SK-N-SH (cell line): ENCODE measurements at regions of chr20 and their contacts with region 1.

Region 1: GRCh38 chr20:56995576-56996075 is 270.8 kb downstream of the BMP7 start:
- DNase-seq: peak; percentile 59
- H3K4me3 ChIP-seq: peak overlapping the region in 1 of 2 experiments; percentile 12; a peak in 1 of 4 replicates
- H3K27ac ChIP-seq: no peak overlapping the region
- H3K4me1 ChIP-seq: no peaks in the 10 kb centered on the region
- H3K27me3 ChIP-seq: peaks cover 18% of the 10 kb centered on the region; the same call in 1 of the 2 replicates
- CTCF ChIP-seq: peak; percentile 59
- EP300 ChIP-seq: no peak
- RAD21 ChIP-seq: peak; percentile 30

Region 2: GRCh38 chr20:57006411-57007170 is 11.0 kb after region 1 on chr20:
- CTCF ChIA-PET with region 1: interaction called, 11 read pairs
- POLR2A ChIA-PET with region 1: no interaction called
- DNase-seq: no peak
- H3K4me3 ChIP-seq: no peak overlapping the region
- H3K27ac ChIP-seq: no peak overlapping the region
- H3K4me1 ChIP-seq: no peaks in the 10 kb centered on the region
- H3K27me3 ChIP-seq: peaks cover 50% of the 10 kb centered on the region; the same call in 1 of the 2 replicates
- CTCF ChIP-seq: no peak
- EP300 ChIP-seq: no peak
- RAD21 ChIP-seq: no peak